Psoas muscle (tissue), 8 donors: ENCODE measurements at regions of chr7 and their contacts with region 1.

Region 1: DNA sequence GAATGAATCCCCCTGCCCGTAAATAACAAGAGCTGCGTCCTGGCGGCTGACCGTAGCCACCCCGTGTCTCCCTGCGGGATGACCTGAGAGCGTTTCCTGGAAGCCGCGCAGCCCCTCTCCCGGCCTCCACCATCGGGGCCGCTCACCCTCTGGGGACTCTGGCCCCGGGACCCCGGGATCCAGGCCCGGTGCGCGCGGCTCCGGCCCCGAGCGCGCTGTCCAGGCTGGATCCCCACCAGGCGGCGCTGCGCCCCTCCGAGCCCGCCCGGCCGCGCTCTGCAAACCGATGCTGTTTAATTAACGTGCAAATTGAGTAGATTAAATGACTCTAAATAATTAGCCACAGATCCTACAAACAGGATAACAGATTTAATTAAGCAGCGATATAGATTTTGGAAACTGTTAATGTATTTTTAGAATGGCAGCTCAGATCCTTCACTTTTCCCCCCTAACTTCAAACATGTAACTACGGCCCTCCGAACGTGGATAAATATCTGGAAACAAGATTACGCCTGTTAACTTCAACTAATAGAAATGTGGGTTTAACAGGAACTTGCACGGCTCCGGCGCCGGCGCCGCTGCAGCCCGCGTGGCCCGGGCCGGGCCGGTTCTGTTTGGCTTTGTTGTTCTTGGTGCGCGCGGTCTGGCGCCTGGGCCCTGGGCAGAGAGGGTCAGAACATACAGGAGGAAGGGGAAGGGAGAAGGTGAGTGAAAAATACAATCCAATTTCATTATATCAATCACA is 7.1 kb upstream of the UNCX start:
- DNase-seq: no peak
- ATAC-seq: peak in 2 of 4 donors; percentile 42 to 52
- H3K4me3 ChIP-seq: no peak overlapping the region
- H3K27ac ChIP-seq: no peak overlapping the region
- H3K4me1 ChIP-seq: no peaks in the 10 kb centered on the region
- H3K27me3 ChIP-seq: peaks cover 10 to 86% (median 40%) of the 10 kb centered on the region in 3 donors
- CTCF ChIP-seq: peak; percentile 67

Region 2: DNA sequence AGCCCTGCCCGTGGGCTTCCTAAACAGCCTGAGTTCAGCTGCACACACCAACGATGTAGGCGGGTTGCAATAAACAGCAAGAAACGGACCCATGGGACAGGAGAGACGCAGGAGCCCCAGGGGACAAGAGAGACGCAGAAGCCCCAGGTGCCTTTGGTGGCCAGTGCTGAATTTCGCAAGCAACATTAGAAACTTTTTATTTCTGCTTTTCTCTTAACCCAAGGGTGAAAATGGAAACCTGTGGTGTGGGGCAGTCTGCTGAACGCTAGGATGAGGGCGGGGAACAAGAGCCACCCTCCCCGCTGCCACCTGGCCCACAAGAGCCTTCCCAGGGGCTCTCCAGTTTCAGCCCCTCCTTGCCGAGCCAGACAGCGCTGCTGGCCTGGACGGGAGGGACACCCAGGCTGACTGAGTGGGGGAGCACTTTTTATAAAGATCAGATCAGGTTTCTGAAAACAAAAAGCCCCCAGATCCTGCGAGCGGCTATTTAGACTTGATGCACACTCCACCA is 201.2 kb before region 1 on chr7:
- intact Hi-C with region 1: no loop called
- DNase-seq: peak; percentile 8 to 57
- ATAC-seq: peak in 1 of 4 donors; percentile 26
- H3K4me3 ChIP-seq: no peak overlapping the region
- H3K27ac ChIP-seq: no peak overlapping the region
- H3K4me1 ChIP-seq: peaks cover 39% of the 10 kb centered on the region
- H3K27me3 ChIP-seq: no peaks in the 10 kb centered on the region
- CTCF ChIP-seq: no peak

Region 3: DNA sequence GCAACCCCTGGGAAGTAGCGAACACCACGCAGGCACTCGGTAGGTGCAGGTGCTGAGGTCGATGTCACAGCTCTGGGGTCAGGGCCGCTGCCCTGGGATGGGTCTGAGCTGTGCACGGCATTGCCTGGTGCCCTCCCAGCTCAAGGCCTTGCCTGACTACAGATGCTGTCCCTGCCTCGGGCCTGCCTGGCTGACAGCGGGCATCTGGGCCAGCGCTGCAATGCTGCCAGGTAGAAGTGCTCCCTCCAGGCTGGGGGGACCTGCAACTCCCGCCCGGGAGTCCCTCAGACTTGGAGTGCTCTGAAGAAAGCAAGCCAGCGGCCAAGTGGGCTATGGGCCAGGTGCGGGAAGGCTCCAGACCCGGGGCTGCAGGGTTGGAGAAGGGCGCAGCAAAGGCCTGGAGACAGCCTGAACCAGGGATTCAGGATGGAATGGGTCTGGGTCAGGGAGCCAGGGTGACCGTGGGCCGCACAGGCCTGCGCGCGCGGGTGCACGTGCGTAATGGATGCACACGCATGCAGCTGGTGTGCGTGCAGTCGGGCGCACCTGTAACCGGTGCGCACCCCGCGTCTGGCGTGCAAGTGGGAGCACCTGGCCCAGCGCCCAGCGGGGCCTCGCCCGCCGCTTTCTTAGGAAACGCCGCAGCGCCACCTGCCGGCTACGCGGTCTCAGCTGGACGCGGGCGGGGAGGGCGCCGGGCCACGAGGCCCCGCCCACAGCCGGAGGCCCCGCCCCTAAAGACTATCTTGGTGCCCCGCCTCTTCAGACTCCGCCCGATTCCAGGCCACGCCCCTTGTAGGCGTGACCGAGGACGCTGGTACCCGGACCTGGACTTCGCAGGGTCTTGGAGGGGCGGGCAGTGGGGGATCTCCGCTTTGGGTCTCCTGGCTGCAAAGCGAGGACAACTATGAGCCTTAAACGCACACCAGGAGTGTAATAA is 187.0 kb after region 1 on chr7:
- intact Hi-C with region 1: loop called in 1 of 2 experiments (anchors 10 kb)
- DNase-seq: peak; percentile 78 to 89
- ATAC-seq: peak; percentile 89 to 98 (median 95)
- H3K4me3 ChIP-seq: no peak overlapping the region
- H3K27ac ChIP-seq: no peak overlapping the region
- H3K4me1 ChIP-seq: no peaks in the 10 kb centered on the region
- H3K27me3 ChIP-seq: peaks cover 0 to 46% (median 7%) of the 10 kb centered on the region in 3 donors
- CTCF ChIP-seq: peak; percentile 66

Region 4: DNA sequence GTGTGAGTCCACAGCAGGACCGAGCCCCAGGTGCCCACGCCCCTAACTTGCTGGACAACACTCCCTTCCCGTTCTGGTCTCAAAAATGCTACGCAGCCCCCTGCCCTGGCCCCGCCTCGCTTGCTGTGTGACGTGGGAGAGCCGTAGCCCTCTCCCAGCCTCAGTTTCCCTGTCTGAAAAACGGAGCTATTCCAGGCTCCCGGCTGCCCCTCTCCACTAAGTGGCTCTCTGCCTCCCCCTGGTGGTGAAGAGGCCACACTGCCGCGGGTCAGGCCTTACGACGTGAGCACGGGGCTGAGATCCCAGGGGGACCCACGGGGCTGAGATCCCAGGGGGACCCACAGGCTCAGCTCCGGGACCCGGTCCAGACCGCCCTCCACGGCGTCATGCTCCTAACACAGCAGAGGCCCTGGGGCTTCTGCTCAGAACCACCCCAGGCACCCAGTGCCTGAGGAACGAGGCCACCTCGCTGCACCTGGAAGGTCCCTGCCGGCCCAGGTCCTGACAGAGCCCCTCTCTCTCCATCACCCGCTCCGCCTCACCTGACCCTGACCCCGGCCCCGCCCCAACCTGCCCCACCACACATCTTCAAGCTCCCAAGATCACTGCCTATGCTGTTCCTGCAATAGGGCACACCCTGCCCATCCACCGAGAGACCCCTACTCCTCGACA is 206.9 kb after region 1 on chr7:
- intact Hi-C with region 1: loop called in 1 of 2 experiments (anchors 10 kb)
- DNase-seq: peak; percentile 68 to 85
- ATAC-seq: peak; percentile 66 to 84 (median 74)
- H3K4me3 ChIP-seq: no peak overlapping the region
- H3K27ac ChIP-seq: no peak overlapping the region
- H3K4me1 ChIP-seq: no peaks in the 10 kb centered on the region
- H3K27me3 ChIP-seq: peaks cover 0 to 39% (median 5%) of the 10 kb centered on the region in 3 donors
- CTCF ChIP-seq: peak; percentile 98

Region 5: DNA sequence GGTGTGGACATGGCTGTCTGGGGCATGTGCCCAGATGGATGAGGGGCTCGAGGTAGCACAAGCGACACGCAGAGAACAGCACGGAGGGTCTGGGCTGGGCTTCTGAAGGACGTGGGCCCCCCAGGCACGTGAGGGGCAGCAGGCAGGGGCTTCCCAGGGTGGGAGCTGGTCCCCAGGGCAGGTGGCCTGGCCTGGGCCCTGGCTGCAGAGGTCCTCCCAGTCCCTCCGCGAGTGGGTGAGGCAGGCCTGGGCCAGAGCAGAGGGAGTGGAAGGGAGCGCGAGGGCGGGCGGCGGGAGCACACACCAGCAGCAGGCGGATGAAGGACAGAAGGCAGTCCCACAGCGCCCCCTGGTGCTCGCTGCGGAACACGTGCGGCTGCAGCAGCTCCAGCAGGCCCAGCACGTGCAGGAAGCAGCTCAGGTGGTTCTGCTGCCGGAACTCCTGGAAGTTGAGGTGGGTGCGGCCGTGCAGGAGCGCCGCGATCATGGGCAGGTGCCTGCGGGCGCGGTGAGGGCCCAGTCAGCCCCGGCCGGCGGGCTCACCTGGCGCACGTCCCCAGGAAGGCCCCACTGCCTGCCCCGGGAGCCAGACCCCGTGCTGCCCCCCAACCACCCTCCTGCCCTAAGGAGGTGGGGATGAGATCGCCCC is 248.4 kb after region 1 on chr7:
- intact Hi-C with region 1: loop called in 1 of 2 experiments (anchors 10 kb)
- DNase-seq: peak; percentile 89 to 94
- ATAC-seq: peak; percentile 70 to 87 (median 77)
- H3K4me3 ChIP-seq: no peak overlapping the region
- H3K27ac ChIP-seq: no peak overlapping the region
- H3K4me1 ChIP-seq: no peaks in the 10 kb centered on the region
- H3K27me3 ChIP-seq: no peaks in the 10 kb centered on the region
- CTCF ChIP-seq: peak; percentile 88